GM12878 (cell line): ENCODE measurements at regions of chr2 and their contacts with region 1.

Region 1: GRCh38 chr2:176454893-176455811 is 185.9 kb downstream of the MTX2 start:
- DNase-seq: no peak
- ATAC-seq: peak; percentile 93
- H3K4me3 ChIP-seq: no peak overlapping the region
- H3K27ac ChIP-seq: no peak overlapping the region
- H3K4me1 ChIP-seq: no peaks in the 10 kb centered on the region
- H3K27me3 ChIP-seq: no peaks in the 10 kb centered on the region
- CTCF ChIP-seq: peak; percentile 75 to 84 (median 80)
- EP300 ChIP-seq: no peak; a peak in 1 of 4 replicates
- POLR2A ChIP-seq: no peak
- RAD21 ChIP-seq: peak; percentile 75

Region 2: GRCh38 chr2:176132205-176133171 is 322.7 kb before region 1 on chr2:
- CTCF ChIA-PET with region 1: interaction called, 44 read pairs
- POLR2A ChIA-PET with region 1: no interaction called
- RAD21 ChIA-PET with region 1: interaction called, 19 read pairs
- SMC1A ChIA-PET with region 1: interaction called, 18 read pairs
- in situ Hi-C with region 1: no loop called
- intact Hi-C with region 1: loop called (anchors 2 kb)
- DNase-seq: no peak
- ATAC-seq: no peak
- H3K4me3 ChIP-seq: peak overlapping the region; percentile 6; the same call in 1 of the 2 replicates
- H3K27ac ChIP-seq: no peak overlapping the region
- H3K4me1 ChIP-seq: no peaks in the 10 kb centered on the region
- H3K27me3 ChIP-seq: peaks cover 10 to 32% of the 10 kb centered on the region in 2 experiments
- CTCF ChIP-seq: no peak
- EP300 ChIP-seq: no peak
- POLR2A ChIP-seq: no peak
- RAD21 ChIP-seq: no peak

Region 3: GRCh38 chr2:176269319-176270099 is 185.6 kb before region 1 on chr2 and contains the start of gene MTX2:
- CTCF ChIA-PET with region 1: interaction called, 5 read pairs
- POLR2A ChIA-PET with region 1: no interaction called
- RAD21 ChIA-PET with region 1: interaction called, 8 read pairs
- SMC1A ChIA-PET with region 1: no interaction called
- in situ Hi-C with region 1: no loop called
- intact Hi-C with region 1: loop called (anchors 10 kb)
- DNase-seq: peak; percentile 19
- ATAC-seq: peak; percentile 98
- H3K4me3 ChIP-seq: peak within 1 kb of the TSS; percentile 91
- H3K27ac ChIP-seq: peak within 1 kb of the TSS; percentile 81
- H3K4me1 ChIP-seq: no peaks in the 10 kb centered on the region
- H3K27me3 ChIP-seq: no peaks in the 10 kb centered on the region
- CTCF ChIP-seq: peak in 2 of 3 experiments; percentile 2 to 25; a peak in 1 of 6 replicates
- EP300 ChIP-seq: no peak
- POLR2A ChIP-seq: peak; percentile 97
- RAD21 ChIP-seq: 0 out of 2 replicates have a peak, but pooled peaks have one; percentile 16
- polyA plus RNA-seq, gene MTX2: 15.7 to 36.8 TPM

Region 4: DNA sequence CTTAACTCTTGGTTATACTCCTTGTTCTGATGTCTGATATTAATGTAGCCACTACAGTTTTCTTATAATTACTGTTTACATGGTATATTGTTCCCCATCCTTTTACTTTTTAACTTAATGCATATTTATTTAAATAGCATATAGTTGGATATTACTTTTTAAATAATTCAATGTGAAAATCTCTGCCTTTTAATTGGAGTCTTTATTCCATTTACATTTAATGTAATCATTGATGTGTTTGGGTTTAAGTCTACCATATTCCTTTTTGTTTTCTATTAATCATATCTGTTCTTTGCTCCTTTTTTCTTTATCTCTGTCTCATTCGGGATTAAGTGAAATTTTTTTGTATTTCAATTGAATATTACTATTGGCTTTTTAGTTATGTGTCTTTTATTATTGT is 76.8 kb before region 1 on chr2:
- CTCF ChIA-PET with region 1: no interaction called
- POLR2A ChIA-PET with region 1: no interaction called
- RAD21 ChIA-PET with region 1: no interaction called
- SMC1A ChIA-PET with region 1: no interaction called
- in situ Hi-C with region 1: no loop called
- intact Hi-C with region 1: no loop called
- DNase-seq: no peak
- ATAC-seq: no peak
- H3K4me3 ChIP-seq: no peak overlapping the region
- H3K27ac ChIP-seq: no peak overlapping the region
- H3K4me1 ChIP-seq: no peaks in the 10 kb centered on the region
- H3K27me3 ChIP-seq: no peaks in the 10 kb centered on the region
- CTCF ChIP-seq: no peak
- EP300 ChIP-seq: no peak
- POLR2A ChIP-seq: no peak
- RAD21 ChIP-seq: no peak

Region 5: DNA sequence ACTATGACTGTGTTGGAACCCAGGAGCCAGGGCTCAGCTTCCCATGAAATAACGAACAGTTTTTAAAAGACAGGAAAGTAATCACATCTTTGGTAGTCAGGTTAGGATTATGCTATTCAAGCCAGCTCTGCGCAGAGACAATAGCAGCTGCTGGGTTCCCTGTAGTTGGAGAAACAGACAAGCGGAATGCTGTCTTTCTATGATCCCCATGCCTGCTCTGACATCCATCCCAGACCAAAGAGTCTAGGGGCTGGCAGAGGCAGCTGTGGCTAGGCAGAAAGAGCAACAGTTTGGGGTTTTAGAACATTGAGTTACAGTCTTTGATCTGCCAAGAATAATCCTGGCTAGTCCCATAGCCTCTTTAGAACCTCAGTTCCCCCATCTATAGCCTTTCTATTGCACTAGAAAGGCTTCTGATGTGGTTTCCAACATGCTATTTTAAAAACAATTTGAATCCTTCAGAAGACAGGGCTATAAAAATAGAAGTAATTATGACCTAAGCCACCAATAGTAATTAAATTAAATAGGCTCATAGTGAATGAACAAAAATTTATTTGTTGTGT is 39.1 kb before region 1 on chr2:
- CTCF ChIA-PET with region 1: no interaction called
- POLR2A ChIA-PET with region 1: no interaction called
- RAD21 ChIA-PET with region 1: no interaction called
- SMC1A ChIA-PET with region 1: no interaction called
- in situ Hi-C with region 1: no loop called
- intact Hi-C with region 1: no loop called
- DNase-seq: no peak
- ATAC-seq: no peak
- H3K4me3 ChIP-seq: no peak overlapping the region
- H3K27ac ChIP-seq: no peak overlapping the region
- H3K4me1 ChIP-seq: no peaks in the 10 kb centered on the region
- H3K27me3 ChIP-seq: no peaks in the 10 kb centered on the region; a peak in 1 of 4 replicates
- CTCF ChIP-seq: no peak
- EP300 ChIP-seq: no peak
- POLR2A ChIP-seq: no peak
- RAD21 ChIP-seq: no peak

Region 6: GRCh38 chr2:176491172-176491904 is 36.2 kb after region 1 on chr2:
- CTCF ChIA-PET with region 1: interaction called, 20 read pairs
- POLR2A ChIA-PET with region 1: no interaction called
- RAD21 ChIA-PET with region 1: interaction called, 12 read pairs
- SMC1A ChIA-PET with region 1: interaction called, 13 read pairs
- in situ Hi-C with region 1: no loop called
- intact Hi-C with region 1: no loop called
- DNase-seq: peak; percentile 67
- ATAC-seq: peak; percentile 89
- H3K4me3 ChIP-seq: no peak overlapping the region
- H3K27ac ChIP-seq: no peak overlapping the region
- H3K4me1 ChIP-seq: peaks cover 26% of the 10 kb centered on the region
- H3K27me3 ChIP-seq: no peaks in the 10 kb centered on the region; a peak in 1 of 4 replicates
- CTCF ChIP-seq: no peak
- EP300 ChIP-seq: peak in 1 of 2 experiments; percentile 80; a peak in 2 of 4 replicates
- POLR2A ChIP-seq: no peak
- RAD21 ChIP-seq: no peak

Region 7: GRCh38 chr2:176565641-176566323 is 110.6 kb after region 1 on chr2:
- CTCF ChIA-PET with region 1: interaction called, 10 read pairs
- POLR2A ChIA-PET with region 1: no interaction called
- RAD21 ChIA-PET with region 1: no interaction called
- SMC1A ChIA-PET with region 1: no interaction called
- in situ Hi-C with region 1: no loop called
- intact Hi-C with region 1: no loop called
- DNase-seq: no peak
- ATAC-seq: no peak
- H3K4me3 ChIP-seq: no peak overlapping the region
- H3K27ac ChIP-seq: no peak overlapping the region
- H3K4me1 ChIP-seq: no peaks in the 10 kb centered on the region
- H3K27me3 ChIP-seq: no peaks in the 10 kb centered on the region; a peak in 1 of 4 replicates
- CTCF ChIP-seq: no peak
- EP300 ChIP-seq: no peak
- POLR2A ChIP-seq: no peak
- RAD21 ChIP-seq: no peak

Region 8: DNA sequence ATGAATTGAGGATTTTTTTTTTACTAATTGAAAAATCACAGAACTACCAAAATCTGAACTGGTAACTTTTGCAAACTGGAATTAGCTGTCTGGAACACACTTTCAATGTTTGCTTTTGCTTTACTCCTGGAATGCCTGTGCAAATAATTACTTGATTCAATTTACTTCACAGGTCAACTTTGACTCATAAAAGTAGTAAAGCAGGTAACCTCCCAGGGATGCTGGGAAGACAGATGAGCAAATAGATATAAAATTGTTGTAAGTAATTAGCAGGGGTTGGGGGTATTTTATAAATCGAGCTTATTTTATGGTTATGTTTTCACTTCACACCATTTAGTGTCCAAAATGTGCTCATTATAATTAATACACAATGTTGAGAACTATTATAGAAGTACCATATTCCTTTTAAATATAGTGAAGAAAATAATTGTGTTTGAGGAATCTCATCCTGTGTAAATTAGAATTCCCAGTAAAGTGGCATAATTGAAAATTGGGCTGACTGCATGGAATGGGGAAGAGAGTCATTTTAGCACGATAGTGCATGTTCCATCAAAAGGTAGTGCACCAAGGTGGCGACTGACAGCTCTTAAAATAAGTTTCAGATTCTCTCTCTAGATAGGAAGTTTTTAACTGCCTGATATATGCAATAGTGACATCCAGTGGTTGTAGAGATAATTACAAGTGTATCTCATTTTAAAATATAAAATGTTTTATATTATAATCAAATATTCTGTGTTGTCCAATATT is 359.3 kb after region 1 on chr2:
- CTCF ChIA-PET with region 1: interaction called, 4 read pairs
- POLR2A ChIA-PET with region 1: no interaction called
- RAD21 ChIA-PET with region 1: interaction called, 6 read pairs
- SMC1A ChIA-PET with region 1: interaction called, 6 read pairs
- in situ Hi-C with region 1: no loop called
- intact Hi-C with region 1: loop called (anchors 10 kb)
- DNase-seq: peak; percentile 8
- ATAC-seq: peak; percentile 80
- H3K4me3 ChIP-seq: no peak overlapping the region
- H3K27ac ChIP-seq: no peak overlapping the region
- H3K4me1 ChIP-seq: no peaks in the 10 kb centered on the region
- H3K27me3 ChIP-seq: no peaks in the 10 kb centered on the region
- CTCF ChIP-seq: peak; percentile 42 to 54 (median 48); a peak in 5 of 6 replicates
- EP300 ChIP-seq: no peak
- POLR2A ChIP-seq: no peak
- RAD21 ChIP-seq: peak; percentile 79